ENCODE measurements at regions of chr20 and their contacts with region 1.

Region 1: DNA sequence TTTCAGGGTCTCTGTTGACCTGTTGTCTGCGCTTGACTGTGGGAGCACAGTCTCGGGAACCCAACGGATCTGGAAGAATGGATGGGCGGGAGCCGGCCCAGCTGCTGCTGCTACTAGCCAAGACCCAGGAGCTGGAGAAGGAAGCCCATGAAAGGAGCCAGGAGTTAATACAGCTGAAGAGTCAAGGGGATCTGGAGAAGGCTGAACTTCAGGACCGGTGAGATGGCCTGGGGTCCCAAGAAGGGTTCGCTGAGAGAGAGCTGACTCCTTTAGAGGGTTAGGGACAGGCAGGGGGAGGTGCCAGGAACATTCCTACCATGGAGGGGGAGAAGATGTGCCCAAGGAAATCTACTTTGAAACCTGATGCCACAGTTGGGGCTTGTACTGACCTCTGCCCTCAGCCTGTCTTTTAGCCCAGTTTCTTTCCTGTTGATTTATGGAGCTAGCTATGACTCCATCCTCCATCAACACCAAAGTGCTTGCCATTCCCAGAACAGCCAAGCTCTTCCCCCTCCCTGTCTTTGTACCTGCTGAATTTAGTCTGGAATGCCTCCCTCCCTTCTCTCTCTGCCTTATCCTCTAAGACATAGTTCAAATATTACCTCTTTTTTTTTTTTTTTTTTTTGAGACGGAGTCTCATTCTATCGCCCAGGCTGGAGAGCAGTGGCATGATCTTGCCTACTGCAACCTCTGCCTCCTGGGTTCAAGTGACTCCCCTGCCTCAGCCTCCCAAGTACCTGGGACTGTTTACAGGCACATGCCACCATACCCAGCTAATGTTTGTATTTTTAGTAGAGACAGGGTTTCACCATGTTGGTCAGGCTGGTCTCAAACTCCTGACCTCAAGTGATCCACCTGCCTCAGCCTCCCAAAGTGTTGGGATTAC is 12.2 kb downstream of the CEP250 start:
- DNase-seq: no peak
- H3K4me3 ChIP-seq: no peak overlapping the region
- H3K27ac ChIP-seq: no peak overlapping the region
- H3K4me1 ChIP-seq: no peaks in the 10 kb centered on the region
- H3K27me3 ChIP-seq: no peaks in the 10 kb centered on the region
- CTCF ChIP-seq: no peak
- POLR2A ChIP-seq: no peak

Region 2: GRCh38 chr20:35410613-35411012 is 57.0 kb before region 1 on chr20:
- intact Hi-C with region 1: loop called (anchors 5 kb)
- DNase-seq: no peak
- H3K4me3 ChIP-seq: peak overlapping the region in 1 of 3 donors; percentile 77
- H3K27ac ChIP-seq: no peak overlapping the region
- H3K4me1 ChIP-seq: peaks cover 0 to 4% of the 10 kb centered on the region in 2 donors
- H3K27me3 ChIP-seq: no peaks in the 10 kb centered on the region
- CTCF ChIP-seq: no peak
- POLR2A ChIP-seq: no peak

Region 3: DNA sequence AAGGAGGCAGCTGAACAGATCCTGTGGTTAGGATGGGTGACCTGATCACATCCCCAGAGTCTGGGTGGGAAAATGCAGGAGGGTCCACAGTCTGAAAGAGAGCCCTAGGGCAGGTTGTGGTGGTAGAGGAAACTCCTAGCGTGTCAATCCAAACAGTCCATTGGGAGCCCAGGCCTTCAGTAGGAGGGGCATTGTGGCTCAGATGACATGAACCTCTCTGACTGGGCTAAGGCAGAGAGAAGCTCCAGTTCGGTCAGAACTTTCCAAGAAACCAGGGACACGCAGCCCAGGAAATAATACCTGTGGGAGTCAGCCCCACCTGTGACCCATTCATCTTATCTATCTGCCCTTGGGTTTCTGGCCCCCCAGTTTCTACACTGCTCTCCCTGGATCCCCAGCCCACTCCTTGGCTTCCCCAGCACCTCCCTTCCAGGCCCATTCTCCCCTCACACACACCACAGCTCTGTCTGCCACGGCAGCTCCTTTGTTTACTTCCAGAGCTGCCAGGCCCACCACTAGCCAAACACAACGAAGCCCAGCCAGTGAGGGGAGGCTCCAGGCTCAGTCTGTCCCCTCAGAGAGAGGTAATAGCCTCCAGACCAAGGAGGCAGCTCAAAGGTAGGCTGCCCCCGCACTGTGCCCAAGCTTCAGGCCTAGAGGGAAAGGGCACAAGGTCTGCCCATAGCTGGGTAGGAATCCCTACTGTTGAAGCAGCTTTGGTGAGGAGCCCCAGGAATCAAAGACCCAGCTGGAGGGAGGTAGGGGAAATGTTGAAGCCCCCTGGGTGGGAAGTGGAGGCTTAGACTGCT is 35.8 kb before region 1 on chr20:
- intact Hi-C with region 1: no loop called
- DNase-seq: no peak
- H3K4me3 ChIP-seq: no peak overlapping the region
- H3K27ac ChIP-seq: no peak overlapping the region
- H3K4me1 ChIP-seq: no peaks in the 10 kb centered on the region
- H3K27me3 ChIP-seq: no peaks in the 10 kb centered on the region
- CTCF ChIP-seq: no peak
- POLR2A ChIP-seq: no peak

Region 4: DNA sequence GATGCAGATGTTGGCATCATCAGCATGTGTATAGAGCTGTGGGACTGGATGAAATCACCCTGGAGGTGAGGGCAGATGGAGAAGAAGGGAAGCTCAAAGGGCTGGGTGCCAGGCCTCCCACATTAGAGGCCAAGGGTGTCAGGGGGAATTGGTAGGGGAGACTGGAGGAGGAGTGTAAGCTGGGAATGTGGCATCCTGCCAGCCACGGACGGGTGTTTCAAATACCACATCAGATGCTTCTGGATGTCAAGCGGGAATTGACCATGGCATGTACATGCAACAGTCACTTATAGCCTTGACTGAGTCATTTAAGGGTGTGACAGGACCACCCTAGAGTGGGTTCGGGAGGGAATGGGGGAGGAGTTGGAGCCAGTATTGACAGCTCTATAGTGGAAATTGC is 83.9 kb after region 1 on chr20:
- intact Hi-C with region 1: no loop called
- DNase-seq: no peak
- H3K4me3 ChIP-seq: no peak overlapping the region
- H3K27ac ChIP-seq: no peak overlapping the region
- H3K4me1 ChIP-seq: no peaks in the 10 kb centered on the region
- H3K27me3 ChIP-seq: no peaks in the 10 kb centered on the region
- CTCF ChIP-seq: no peak
- POLR2A ChIP-seq: no peak

Region 5: GRCh38 chr20:35568645-35569262 is 101.2 kb after region 1 on chr20:
- intact Hi-C with region 1: no loop called
- DNase-seq: no peak
- H3K4me3 ChIP-seq: no peak overlapping the region
- H3K27ac ChIP-seq: no peak overlapping the region
- H3K4me1 ChIP-seq: no peaks in the 10 kb centered on the region
- H3K27me3 ChIP-seq: no peaks in the 10 kb centered on the region
- CTCF ChIP-seq: no peak
- POLR2A ChIP-seq: no peak

Measured in breast epithelium (tissue), 4 donors.